ENCODE measurements at regions of chr7 and their contacts with region 1.

Region 1: DNA sequence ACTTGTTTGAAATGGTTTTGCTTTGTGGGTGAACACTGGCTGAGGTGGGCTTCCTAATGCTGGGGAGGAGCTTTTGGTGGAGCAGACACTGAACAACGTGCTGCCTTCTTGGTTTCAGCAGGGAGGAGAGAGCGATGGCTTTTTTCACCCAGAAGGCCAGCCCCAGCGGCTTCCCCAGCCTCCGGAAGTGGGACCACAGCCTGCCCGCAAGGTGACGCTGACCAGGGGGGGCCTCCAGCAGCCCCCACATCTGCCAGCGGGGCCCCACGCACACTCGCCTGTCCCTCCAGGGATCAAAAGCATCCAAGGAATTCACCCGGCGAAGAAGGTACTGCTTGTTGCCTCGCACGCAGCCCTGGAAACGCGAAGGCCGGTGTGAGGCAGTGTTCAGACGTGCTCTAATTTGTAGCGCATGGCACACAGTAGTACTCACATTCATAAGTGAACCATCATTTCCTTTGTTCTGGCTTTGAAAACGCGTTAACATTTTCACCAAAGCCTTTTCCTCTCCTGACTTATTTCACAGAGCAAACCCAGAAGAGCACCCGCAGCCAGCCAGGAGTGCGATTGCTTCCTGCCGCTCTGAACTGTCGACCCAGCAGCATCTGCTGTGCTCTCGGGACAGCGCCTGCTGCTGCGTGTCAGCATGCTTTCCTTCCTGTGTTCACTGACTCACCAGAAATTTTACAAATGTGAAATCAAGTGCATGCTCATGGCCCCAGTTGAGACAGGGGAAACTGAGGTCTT is 48.4 kb downstream of the SHH start:
- DNase-seq: no peak

Region 2: DNA sequence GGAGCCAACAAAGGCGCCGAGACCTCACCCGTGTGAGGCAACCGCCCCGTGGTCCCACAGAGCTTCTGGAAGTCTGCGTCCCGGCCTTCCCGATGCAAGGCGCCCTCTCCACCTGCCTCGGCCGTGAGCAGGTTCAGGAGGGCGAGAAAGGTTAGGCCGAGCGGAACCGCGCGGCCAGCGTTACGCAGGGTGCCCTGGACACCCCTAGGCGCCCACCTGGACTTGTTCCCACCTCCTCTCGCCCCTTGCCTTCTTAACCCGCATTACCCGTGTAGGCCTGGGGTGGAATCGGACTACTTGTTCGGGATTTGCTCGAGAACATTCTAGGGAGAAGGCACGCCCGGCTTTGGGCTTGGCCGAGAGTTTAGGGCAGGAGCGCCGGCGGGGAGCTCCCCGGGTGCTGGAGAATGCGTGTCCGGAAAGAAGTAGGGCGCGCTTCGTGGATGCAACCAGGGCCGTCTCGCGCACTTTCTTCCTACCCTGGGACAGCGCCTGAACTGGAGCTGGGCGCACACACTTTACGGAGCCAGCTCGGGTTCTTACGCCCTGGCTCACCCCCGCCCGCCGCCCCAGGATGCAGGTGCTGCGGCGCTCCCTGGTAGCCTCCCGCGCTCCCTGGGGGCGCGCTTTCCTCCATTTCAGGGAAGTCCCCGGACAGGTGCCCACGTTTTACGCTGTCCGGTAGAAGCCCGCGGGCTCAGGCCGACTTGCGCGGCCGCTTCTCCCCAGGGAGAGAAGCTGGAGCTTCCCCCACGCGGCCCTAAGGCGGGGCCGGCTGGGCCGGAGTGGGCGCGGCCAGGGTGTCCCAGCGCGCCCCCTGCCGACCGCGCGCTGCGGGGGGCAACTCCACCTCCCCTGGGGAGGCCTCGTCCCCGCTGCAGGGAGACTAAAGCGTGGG is 391.7 kb before region 1 on chr7:
- intact Hi-C with region 1: loop called (anchors 10 kb)
- DNase-seq: peak; percentile 70

Region 3: DNA sequence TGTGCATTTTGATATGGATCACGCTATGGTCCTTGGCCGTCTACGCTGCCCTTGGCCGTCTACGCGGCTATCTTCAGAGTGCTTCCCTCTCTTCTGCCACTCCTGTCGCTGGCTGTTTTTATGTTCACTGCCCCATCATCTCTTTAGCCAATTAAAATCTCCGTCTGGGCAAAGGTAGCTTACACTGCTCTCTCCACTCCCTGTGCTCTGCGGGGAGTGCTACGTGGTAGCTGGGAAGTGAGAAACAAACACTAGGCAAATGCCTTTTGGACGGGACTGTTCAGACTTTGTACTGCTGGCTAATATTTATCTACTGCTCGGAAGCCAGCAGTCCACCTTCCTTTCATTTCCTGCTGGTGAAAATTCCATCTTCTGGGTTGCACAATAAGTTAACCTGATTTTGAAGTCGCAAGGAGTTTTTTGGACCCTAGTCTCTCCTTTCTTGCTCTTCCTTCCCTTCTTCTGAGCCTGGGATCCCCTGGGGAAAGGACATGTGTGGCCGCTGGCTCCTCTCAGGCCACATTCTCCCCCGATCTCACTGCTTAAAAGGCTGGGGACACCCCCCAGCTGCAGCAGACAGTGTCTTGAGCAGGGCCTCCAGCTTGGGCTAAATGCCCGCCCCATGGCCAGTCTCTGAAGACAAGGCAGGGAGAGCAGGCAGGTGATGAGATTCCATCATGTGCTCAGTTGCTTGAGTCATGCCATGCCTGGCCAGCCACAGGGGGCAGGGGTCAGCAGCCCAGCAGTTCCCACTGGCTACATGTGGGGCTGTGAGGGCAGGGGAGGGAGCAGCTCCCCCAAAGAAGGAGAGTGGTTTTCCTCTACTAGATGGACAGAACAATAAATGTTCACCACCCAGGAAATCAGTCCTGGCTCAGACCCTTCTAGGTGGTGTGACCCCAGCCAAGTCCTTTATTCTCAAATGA is 144.9 kb before region 1 on chr7:
- intact Hi-C with region 1: no loop called
- DNase-seq: no peak

Region 4: DNA sequence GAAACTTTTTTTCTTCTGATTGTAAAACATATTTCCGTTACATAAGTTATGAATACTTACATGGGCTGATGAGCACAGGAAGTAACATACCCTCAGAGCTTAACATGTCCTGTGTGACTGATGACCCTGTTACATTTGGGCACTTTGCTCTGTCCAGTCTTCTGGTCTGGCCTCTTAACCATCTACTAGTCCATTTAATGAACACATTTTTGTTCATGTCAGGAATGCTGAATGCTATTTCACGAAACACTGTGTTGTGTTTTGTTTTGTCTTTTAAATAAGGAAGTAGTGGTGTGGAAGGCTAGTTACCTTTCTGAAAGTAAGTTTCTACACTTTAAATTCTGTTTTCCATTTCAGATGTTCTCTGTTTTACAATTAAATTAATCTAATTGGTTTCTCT is 41.7 kb before region 1 on chr7:
- intact Hi-C with region 1: no loop called
- DNase-seq: no peak

Measured in cardiac septum (tissue), 1 donor.